Activated naive CD4-positive, alpha-beta T cell treated with anti-CD3 and anti-CD28 coated beads for 36 hours (primary cell): ENCODE measurements at regions of chr12 and their contacts with region 1.

Region 1: DNA sequence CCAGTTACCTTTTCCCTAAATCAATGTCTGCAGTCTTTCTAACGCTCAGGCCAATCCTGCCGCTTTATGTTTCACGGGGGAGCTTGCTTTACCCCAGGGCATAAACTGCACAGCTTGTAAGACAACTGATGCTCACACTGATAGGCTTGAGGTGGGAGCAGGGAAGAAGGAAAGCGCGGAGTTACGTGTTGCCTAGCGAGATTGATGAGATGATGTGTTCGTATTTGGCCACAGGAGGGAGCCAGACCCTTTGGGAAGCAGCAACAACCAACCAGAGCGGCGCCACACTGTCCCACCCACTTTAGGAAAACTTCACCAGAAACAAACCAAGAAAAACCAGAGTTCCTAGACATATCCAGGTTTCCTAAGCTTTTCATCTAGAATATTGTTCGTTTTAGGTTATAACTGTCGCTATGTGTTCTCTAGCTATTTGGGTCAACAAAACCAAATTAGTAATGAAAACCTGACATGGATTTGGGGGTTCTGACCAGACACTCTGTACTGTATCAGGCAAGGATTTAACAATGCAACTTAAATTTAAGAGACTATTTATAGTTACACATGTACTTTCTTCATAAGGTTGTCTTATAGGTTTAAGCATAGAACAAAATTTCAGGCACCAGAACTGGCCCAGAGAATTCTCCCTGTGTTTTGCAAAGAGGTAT is 2.4 kb downstream of the IL26 start:
- DNase-seq: peak; percentile 88
- H3K4me3 Mint-ChIP-seq: peak overlapping the region; percentile 46
- H3K27ac Mint-ChIP-seq: no peak overlapping the region
- H3K4me1 Mint-ChIP-seq: peaks cover 6% of the 10 kb centered on the region
- H3K27me3 Mint-ChIP-seq: no peaks in the 10 kb centered on the region

Region 2: DNA sequence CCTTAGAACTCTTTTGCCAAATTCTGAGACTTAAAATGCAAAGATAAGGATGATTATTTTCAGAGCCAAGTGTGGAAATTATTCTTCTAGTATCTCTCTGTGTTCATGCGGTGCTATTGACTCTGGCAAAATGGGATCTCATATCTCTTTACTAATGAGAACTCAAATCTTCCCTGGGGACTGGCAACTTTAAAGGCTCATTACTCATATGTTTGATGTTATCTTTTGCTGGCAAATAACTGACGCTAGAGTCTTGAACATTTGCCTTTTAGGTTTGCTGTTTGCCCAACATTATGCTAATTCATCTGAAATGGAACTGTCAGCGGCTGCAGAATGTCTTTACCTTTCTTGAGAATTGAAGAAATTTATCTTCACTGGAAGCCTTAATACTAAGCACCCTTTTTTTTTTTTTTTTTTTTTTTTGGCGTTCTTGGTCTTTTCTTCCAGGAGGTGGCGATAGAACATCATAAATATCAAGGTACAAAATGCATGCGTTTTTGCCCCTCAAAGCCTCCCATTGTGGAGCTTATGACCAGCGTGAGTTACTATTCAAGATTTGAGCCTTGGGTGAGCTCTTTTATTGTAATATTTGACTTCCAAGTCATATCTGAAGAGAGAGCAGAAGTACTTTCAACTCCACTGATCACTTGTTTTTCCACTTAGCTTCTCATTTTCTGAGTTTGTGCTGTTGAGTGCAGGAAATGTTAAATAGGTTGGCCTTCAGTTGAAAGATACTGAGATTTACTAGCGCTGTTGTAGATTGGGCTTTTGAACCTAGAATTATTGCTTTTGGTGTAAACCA is 867.4 kb before region 1 on chr12:
- CTCF ChIA-PET with region 1: no interaction called
- intact Hi-C with region 1: loop called (anchors 5 kb)
- DNase-seq: peak; percentile 17
- H3K4me3 Mint-ChIP-seq: no peak overlapping the region
- H3K27ac Mint-ChIP-seq: no peak overlapping the region
- H3K4me1 Mint-ChIP-seq: peaks cover 25% of the 10 kb centered on the region
- H3K27me3 Mint-ChIP-seq: no peaks in the 10 kb centered on the region

Region 3: DNA sequence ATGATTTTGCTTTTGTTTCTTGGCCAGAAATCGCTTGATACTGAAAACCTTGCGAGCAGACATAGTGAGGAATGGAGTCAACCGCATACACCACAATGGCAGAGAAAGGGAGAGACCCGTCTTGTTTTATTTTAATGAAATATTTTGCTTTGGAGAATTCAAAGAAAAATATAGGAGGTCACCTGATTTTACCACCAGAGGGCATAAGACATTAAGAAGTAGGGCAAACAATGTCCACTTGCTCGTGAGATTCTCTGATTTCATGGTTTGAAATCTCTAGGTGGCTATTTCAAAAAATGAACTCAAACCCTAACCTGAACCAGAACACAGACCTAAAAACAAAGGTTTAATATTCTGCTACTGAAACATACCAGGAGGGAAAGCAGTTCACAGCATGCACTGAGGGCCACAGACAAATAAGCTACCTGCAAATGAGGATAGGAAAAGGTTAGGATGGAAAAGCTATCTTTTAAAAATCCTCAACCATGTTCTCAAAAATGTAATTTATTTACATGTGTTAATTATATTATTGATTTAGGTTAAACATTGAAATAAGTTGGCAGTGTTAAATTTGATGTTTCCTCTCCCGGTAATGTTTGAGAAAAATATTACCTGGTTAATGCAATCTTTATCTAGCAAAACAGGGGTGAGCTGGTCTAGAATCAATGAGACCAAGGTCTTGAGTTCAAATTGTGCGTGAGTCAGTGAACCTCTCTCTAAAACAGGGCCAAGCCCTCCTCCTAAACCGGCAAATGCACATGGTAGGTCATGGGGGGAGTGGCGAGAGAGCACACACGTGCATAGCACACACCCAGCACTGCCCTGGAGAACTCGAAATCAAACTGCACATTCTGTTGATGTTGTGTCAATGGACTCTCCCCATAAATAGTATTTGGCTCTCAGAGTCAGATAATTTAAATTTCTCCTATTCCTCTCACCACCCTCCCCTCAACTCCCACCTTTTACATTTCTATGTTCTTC is 221.4 kb before region 1 on chr12:
- CTCF ChIA-PET with region 1: interaction called, 7 read pairs
- intact Hi-C with region 1: loop called (anchors 5 kb)
- DNase-seq: no peak
- H3K4me3 Mint-ChIP-seq: no peak overlapping the region
- H3K27ac Mint-ChIP-seq: no peak overlapping the region
- H3K4me1 Mint-ChIP-seq: peaks cover 13% of the 10 kb centered on the region
- H3K27me3 Mint-ChIP-seq: no peaks in the 10 kb centered on the region

Region 4: DNA sequence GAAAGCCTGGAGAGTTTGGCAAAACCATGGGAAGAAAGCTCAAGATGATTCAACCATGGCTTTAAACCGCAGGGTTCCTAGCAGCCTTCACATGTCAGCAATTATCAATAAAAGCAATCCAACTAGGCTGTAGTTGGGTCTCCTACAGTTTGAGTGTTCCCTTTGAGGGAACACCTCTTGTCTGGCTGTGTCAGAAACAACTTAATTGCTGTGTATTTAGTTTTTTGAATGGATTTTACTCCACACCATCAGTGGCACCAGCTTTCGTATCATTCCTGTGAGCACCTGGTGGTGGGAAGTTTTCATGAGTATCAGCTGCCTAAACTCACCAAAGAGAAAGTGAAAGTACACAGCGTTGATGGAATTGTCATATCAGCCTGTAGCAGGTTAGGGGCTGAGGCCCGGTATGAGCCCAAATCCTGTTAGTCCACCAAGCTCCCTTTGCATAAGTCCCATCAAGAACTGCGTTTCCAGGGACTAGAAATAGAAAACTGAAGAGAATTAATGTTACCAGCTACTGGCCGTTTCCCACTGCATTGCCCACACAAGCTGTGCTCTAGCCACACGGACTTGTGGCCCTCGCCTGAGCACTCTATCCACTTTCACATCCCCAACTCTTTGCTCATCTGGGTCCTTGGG is 13.3 kb after region 1 on chr12:
- CTCF ChIA-PET with region 1: interaction called, 41 read pairs
- intact Hi-C with region 1: no loop called
- DNase-seq: peak; percentile 43
- H3K4me3 Mint-ChIP-seq: peak overlapping the region; percentile 75
- H3K27ac Mint-ChIP-seq: peak overlapping the region; percentile 57
- H3K4me1 Mint-ChIP-seq: peaks cover 48% of the 10 kb centered on the region
- H3K27me3 Mint-ChIP-seq: no peaks in the 10 kb centered on the region

Region 5: GRCh38 chr12:68245180-68246021 is 22.2 kb after region 1 on chr12:
- CTCF ChIA-PET with region 1: interaction called, 11 read pairs
- intact Hi-C with region 1: no loop called
- DNase-seq: no peak
- H3K4me3 Mint-ChIP-seq: no peak overlapping the region
- H3K27ac Mint-ChIP-seq: no peak overlapping the region
- H3K4me1 Mint-ChIP-seq: peaks cover 23% of the 10 kb centered on the region
- H3K27me3 Mint-ChIP-seq: peaks cover 22% of the 10 kb centered on the region

Region 6: DNA sequence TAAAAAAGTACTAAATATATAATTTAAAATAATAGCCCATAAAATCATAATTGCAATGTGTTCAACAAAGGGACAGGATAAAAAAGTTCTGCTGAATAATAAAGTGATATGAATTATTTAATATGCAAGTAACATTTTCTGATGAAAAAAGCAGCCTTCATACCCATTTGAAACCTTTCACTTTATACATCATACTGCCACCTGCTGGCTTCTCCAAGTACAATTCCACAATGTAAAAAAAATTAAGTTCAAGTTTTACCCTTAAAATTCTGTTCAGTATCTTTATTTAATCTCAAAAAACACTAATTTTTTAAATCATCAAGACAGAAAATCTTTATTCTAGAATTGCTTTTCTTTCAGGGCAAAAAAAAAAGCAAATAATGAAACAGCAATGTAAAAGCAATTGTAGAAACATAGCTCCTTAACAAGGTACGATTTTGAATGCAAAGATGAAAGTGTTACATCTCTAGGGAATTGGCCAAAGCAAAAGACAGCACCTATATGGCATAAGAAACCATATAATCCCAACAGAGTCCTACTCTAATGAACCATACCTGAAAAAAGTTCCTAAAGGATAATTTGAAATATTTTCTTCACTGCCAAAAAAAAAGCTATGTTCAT is 93.9 kb after region 1 on chr12:
- CTCF ChIA-PET with region 1: interaction called, 132 read pairs
- intact Hi-C with region 1: loop called (anchors 1 kb)
- DNase-seq: peak; percentile 69
- H3K4me3 Mint-ChIP-seq: no peak overlapping the region
- H3K27ac Mint-ChIP-seq: no peak overlapping the region
- H3K4me1 Mint-ChIP-seq: no peaks in the 10 kb centered on the region
- H3K27me3 Mint-ChIP-seq: no peaks in the 10 kb centered on the region

Region 7: DNA sequence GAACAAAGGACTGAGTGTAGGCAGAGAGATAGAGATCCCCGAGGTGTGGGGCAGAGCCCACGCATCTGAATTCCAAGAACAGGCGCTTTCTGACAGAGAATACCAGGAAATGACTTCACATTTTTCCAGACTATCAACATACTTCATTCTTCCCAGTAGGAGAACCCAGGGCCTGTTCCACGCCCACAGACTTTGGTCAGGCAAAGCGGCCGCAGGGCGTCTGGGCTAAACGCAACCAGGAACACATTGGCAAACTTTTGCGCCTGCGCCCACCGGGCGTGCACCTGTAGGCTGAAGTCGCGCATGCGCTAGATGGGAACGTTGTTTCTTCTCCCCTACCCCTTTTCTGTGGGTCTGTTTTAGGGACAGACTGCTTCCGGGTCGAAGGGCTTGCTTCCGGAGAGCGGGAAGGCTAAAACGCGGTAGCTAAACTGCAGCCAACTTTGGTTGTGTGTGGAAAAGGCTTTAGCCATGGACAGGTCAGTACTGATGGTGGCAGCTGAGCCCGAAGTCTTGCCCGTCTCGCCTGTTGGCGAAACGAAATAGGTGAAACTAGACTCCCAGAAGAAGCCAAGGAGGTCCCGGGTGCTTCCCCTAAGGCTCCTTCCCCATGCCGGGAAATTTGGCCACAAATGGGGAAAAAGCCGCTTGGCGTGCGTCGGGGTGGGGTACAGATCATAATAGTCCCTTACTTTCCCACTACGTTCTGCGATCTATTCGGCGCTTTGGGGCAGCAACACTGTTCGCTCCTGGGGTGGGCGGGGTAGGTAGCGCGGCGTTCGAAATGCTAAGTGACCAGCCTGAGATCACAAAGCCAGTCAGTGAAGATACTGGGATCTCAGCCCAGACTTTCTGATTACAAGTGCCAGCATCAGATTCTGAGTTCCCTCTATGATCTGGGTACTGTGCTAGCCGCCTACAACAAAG is 463.6 kb after region 1 on chr12 and contains the start of gene NUP107:
- CTCF ChIA-PET with region 1: no interaction called
- intact Hi-C with region 1: loop called (anchors 2 kb)
- DNase-seq: peak; percentile 98
- H3K4me3 Mint-ChIP-seq: peak within 1 kb of the TSS; percentile 98
- H3K27ac Mint-ChIP-seq: peak within 1 kb of the TSS; percentile 96
- H3K4me1 Mint-ChIP-seq: peaks cover 39% of the 10 kb centered on the region
- H3K27me3 Mint-ChIP-seq: no peaks in the 10 kb centered on the region
- total RNA-seq, gene NUP107: 126 to 135 TPM